Aorta (tissue), 5 donors: ENCODE measurements at regions of chr19 and their contacts with region 1.

Region 1: GRCh38 chr19:57389730-57390598 is at the start of gene ZNF548:
- DNase-seq: peak; percentile 97 to 99
- ATAC-seq: peak; percentile 100
- H3K4me3 ChIP-seq: peak within 1 kb of the TSS; percentile 42 to 76
- H3K27ac ChIP-seq: peak within 1 kb of the TSS; percentile 61 to 78
- H3K4me1 ChIP-seq: peaks cover 0 to 2% of the 10 kb centered on the region in 2 donors
- H3K27me3 ChIP-seq: no peaks in the 10 kb centered on the region
- total RNA-seq, gene ZNF548: 23.4 to 29.0 TPM

Region 2: GRCh38 chr19:57410877-57411671 is 21.1 kb after region 1 on chr19 and contains the start of gene ZNF17:
- intact Hi-C with region 1: loop called in 1 of 2 experiments (anchors 2 kb)
- DNase-seq: peak; percentile 97 to 98
- ATAC-seq: peak; percentile 100
- H3K4me3 ChIP-seq: peak within 1 kb of the TSS; percentile 77 to 82
- H3K27ac ChIP-seq: peak within 1 kb of the TSS in 1 of 2 donors; percentile 21
- H3K4me1 ChIP-seq: no peaks in the 10 kb centered on the region
- H3K27me3 ChIP-seq: no peaks in the 10 kb centered on the region
- total RNA-seq, gene ZNF17: 15.2 to 15.8 TPM

Region 3: DNA sequence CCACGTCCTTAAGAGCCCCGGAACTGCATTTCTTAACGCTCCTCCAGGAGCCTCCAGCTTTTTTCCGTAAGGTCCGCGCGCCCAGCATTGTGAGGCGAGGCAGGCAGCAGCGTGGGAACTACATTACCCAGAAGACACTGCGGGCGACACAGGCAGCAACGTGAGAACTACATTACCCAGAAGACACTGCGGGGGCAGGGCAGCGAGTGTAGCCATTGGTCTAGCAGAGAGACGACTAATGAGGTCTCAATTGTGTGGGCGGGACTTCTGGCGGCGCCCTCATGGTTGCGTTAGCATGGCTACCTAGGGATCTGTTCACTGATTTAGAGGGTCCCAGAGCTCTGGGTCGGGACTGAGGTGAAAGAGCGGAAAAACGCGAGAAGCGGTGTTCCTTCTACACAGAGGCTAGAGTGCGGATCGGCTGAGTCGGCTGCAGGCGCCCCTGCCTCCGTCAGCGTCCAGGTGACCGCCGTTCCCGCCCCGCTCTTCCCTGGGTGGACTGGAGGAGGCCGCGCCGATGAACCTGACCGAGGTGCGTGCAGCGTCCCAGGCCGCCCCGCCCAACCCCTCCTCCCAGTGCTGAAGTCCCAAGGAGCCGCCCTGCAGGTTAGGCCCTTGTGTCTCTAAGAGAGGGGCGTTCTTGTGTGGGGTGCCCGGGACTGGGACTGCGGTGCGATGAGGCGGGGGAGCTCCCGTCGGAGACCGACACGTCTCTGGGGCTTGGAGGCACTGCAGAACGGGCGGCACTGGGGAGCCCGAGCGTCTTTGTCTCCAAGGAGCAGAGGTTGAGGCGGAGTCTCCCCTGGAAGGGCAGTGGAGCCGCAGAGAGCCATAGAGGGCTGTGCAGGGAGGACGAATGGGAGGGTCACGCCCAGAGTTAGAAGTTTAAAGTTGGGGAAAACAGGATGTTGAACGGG is 45.4 kb after region 1 on chr19 and contains the start of gene ZNF749:
- intact Hi-C with region 1: loop called in 1 of 2 experiments (anchors 2 kb)
- DNase-seq: peak; percentile 97 to 99
- ATAC-seq: peak; percentile 100
- H3K4me3 ChIP-seq: peak within 1 kb of the TSS; percentile 79 to 81
- H3K27ac ChIP-seq: no peak within 1 kb of the TSS
- H3K4me1 ChIP-seq: no peaks in the 10 kb centered on the region
- H3K27me3 ChIP-seq: no peaks in the 10 kb centered on the region
- total RNA-seq, gene ZNF749: 6.1 to 7.6 TPM

Region 4: GRCh38 chr19:57537953-57538547 is 148.1 kb after region 1 on chr19:
- intact Hi-C with region 1: no loop called
- DNase-seq: no peak
- ATAC-seq: no peak
- H3K4me3 ChIP-seq: peak overlapping the region in 1 of 2 donors; percentile 23
- H3K27ac ChIP-seq: no peak overlapping the region
- H3K4me1 ChIP-seq: no peaks in the 10 kb centered on the region
- H3K27me3 ChIP-seq: no peaks in the 10 kb centered on the region

Region 5: GRCh38 chr19:57570707-57571106 is 180.7 kb after region 1 on chr19:
- intact Hi-C with region 1: no loop called
- DNase-seq: no peak
- ATAC-seq: no peak
- H3K4me3 ChIP-seq: no peak overlapping the region
- H3K27ac ChIP-seq: no peak overlapping the region
- H3K4me1 ChIP-seq: no peaks in the 10 kb centered on the region
- H3K27me3 ChIP-seq: no peaks in the 10 kb centered on the region